Adrenal gland (tissue), 19 donors: ENCODE measurements at regions of chr12 and their contacts with region 1.

Region 1: DNA sequence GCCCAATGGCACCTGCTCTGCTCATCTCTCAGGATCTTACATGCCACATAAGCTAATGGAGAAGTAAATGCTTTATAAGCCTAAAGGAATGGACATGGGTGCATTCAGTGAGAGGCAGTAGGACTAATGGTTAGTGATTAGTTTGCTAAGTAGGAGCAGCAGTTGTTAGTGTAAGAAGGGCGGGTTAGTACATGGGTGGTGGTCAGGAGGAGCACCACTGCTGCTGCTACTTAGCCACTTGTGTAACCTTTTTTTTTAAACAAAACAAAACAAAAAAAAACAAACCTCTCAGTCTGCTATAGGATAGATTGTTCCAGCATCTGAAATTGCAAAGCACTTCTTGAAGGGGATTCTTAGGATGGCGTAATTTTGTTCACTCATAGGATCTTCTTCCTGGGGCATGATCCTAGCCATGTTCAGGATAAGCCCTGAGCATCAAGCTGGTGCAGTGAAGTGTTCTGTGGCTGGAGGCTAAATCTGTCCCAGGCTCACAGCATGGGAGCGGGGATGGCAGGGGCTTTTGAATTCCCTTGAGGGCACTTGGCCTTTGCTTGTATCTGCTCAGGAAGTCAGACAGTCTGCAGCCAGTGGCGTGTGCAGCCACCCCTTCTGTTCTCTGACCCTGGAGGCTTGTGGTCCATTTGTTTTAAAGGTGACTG is 63.6 kb downstream of the CHST11 start:
- DNase-seq: no peak
- H3K4me3 ChIP-seq: no peak overlapping the region
- H3K27ac ChIP-seq: no peak overlapping the region
- H3K4me1 ChIP-seq: peaks cover 14 to 58% of the 10 kb centered on the region in 2 donors
- H3K27me3 ChIP-seq: no peaks in the 10 kb centered on the region
- CTCF ChIP-seq: no peak
- POLR2A ChIP-seq: no peak

Region 2: DNA sequence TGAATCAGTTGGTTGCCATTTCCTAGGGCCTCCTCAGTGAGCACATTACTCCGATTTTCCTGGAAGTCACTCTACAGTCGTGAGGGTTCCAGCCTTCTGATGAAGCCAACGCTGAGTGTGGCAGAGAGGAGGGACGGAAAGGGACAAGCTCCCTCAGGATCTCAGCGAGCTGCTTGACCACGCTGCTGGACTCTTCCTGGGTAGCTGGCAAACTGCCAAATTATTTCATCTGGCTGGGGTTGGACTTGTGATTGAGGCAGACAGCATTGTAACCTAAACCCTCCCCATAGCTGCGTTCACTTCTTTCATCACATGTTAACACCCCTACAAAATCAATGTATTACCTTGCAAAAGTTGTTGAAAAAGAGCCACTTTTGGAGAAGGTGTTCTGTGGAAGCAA is 133.2 kb before region 1 on chr12:
- intact Hi-C with region 1: no loop called
- DNase-seq: peak in 1 of 7 donors; percentile 50
- H3K4me3 ChIP-seq: no peak overlapping the region
- H3K27ac ChIP-seq: no peak overlapping the region
- H3K4me1 ChIP-seq: no peaks in the 10 kb centered on the region
- H3K27me3 ChIP-seq: no peaks in the 10 kb centered on the region
- CTCF ChIP-seq: no peak
- POLR2A ChIP-seq: no peak

Region 3: GRCh38 chr12:104456417-104456949 is 63.9 kb before region 1 on chr12 and contains the start of gene CHST11:
- intact Hi-C with region 1: loop called in 1 of 2 experiments (anchors 5 kb)
- DNase-seq: peak; percentile 85 to 93 (median 90)
- H3K4me3 ChIP-seq: peak within 1 kb of the TSS; percentile 30 to 89 (median 76)
- H3K27ac ChIP-seq: peak within 1 kb of the TSS in 4 of 5 donors; percentile 25 to 92 (median 85)
- H3K4me1 ChIP-seq: peaks cover 4 to 30% of the 10 kb centered on the region in 2 donors
- H3K27me3 ChIP-seq: no peaks in the 10 kb centered on the region
- CTCF ChIP-seq: peak in 5 of 6 experiments; percentile 21 to 57 (median 47)
- POLR2A ChIP-seq: no peak
- total RNA-seq, gene CHST11: 8.5 to 95.1 (median 35.8) TPM

Region 4: GRCh38 chr12:104596134-104596799 is 75.9 kb after region 1 on chr12:
- intact Hi-C with region 1: no loop called
- DNase-seq: peak in 6 of 7 donors; percentile 51 to 74 (median 62)
- H3K4me3 ChIP-seq: no peak overlapping the region
- H3K27ac ChIP-seq: no peak overlapping the region
- H3K4me1 ChIP-seq: peaks cover 0 to 28% of the 10 kb centered on the region in 2 donors
- H3K27me3 ChIP-seq: no peaks in the 10 kb centered on the region
- CTCF ChIP-seq: no peak
- POLR2A ChIP-seq: no peak

Region 5: DNA sequence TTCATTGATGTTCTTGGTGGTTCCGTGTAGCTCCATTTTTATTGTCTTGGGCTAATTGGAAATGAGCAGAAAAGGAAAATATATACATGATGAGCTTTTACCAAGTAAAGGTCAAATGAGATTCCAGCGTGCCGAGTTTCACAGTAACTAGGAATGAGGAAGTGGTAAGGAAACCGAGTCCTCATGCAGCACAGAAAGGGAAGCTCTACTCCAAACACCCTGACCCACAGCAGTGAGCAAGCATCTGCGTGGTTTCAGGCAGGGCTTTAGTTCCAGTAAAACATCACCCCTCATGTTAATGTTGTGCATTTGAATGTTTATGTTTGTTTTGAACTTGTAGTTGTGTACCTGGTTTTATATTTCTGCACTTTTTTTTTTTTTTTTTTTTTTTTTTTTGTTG is 229.7 kb after region 1 on chr12:
- intact Hi-C with region 1: no loop called
- DNase-seq: peak in 3 of 7 donors; percentile 44 to 52 (median 47)
- H3K4me3 ChIP-seq: no peak overlapping the region
- H3K27ac ChIP-seq: no peak overlapping the region
- H3K4me1 ChIP-seq: peaks cover 0 to 19% of the 10 kb centered on the region in 2 donors
- H3K27me3 ChIP-seq: no peaks in the 10 kb centered on the region
- CTCF ChIP-seq: no peak
- POLR2A ChIP-seq: no peak